Heart left ventricle (tissue), 16 donors: ENCODE measurements at regions of chr17 and their contacts with region 1.

Region 1: GRCh38 chr17:5438716-5439445 is at the start of gene C1QBP:
- DNase-seq: peak; percentile 90 to 94 (median 92)
- ATAC-seq: peak; percentile 92 to 98 (median 96)
- H3K4me3 ChIP-seq: peak within 1 kb of the TSS; percentile 60 to 100 (median 82)
- H3K27ac ChIP-seq: peak within 1 kb of the TSS; percentile 35 to 86 (median 76)
- H3K4me1 ChIP-seq: peaks cover 0 to 31% (median 13%) of the 10 kb centered on the region in 12 donors
- H3K27me3 ChIP-seq: no peaks in the 10 kb centered on the region
- CTCF ChIP-seq: peak in 11 of 12 donors; percentile 99 to 100 (median 100)
- POLR2A ChIP-seq: peak in 1 of 2 donors; percentile 78
- total RNA-seq, gene C1QBP: 108 to 159 (median 121) TPM

Region 2: GRCh38 chr17:5419959-5420653 is 18.8 kb before region 1 on chr17 and contains the start of gene RPAIN:
- intact Hi-C with region 1: loop called in 1 of 10 experiments (anchors 2 kb)
- DNase-seq: peak; percentile 88 to 94 (median 91)
- ATAC-seq: peak; percentile 91 to 94 (median 92)
- H3K4me3 ChIP-seq: peak within 1 kb of the TSS; percentile 63 to 94 (median 78)
- H3K27ac ChIP-seq: peak within 1 kb of the TSS; percentile 56 to 87 (median 82)
- H3K4me1 ChIP-seq: peaks cover 5 to 39% (median 28%) of the 10 kb centered on the region in 12 donors
- H3K27me3 ChIP-seq: no peaks in the 10 kb centered on the region
- CTCF ChIP-seq: no peak
- POLR2A ChIP-seq: peak in 1 of 2 donors; percentile 45
- total RNA-seq, gene RPAIN: 23.5 to 46.2 (median 29.0) TPM

Region 3: GRCh38 chr17:5619088-5619740 is 180.3 kb after region 1 on chr17:
- intact Hi-C with region 1: no loop called
- DNase-seq: no peak
- ATAC-seq: no peak
- H3K4me3 ChIP-seq: no peak overlapping the region
- H3K27ac ChIP-seq: no peak overlapping the region
- H3K4me1 ChIP-seq: no peaks in the 10 kb centered on the region
- H3K27me3 ChIP-seq: peaks cover 0 to 65% (median 21%) of the 10 kb centered on the region in 9 donors
- CTCF ChIP-seq: no peak
- POLR2A ChIP-seq: no peak